ENCODE measurements at regions of chr14 and their contacts with region 1.

Region 1: DNA sequence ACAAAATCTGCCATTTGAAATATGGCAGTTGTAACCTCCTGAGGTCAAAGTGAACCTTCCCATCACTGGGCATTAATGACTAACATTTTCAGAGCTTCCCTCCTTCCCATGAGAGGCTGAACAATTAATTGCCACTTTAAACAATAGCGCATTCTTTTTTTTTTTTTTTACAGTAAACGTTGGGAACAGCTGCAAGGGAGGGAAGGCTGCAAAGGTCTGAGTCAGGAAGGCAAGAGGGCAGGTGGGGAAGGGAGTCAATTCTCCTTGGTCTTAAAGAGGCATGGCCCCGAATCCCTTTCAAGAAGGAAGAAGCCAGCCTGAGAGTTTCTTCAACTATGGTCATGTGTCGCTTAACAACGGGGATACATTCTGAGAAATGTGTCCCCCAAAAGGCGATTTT is 41.0 kb upstream of the PLEKHG3 start:
- DNase-seq: no peak
- H3K4me3 ChIP-seq: no peak overlapping the region
- H3K27ac ChIP-seq: no peak overlapping the region
- H3K4me1 ChIP-seq: peaks cover 0 to 10% (median 0%) of the 10 kb centered on the region in 4 donors
- H3K27me3 ChIP-seq: no peaks in the 10 kb centered on the region
- CTCF ChIP-seq: no peak
- EP300 ChIP-seq: no peak
- POLR2A ChIP-seq: no peak

Region 2: GRCh38 chr14:64636208-64636979 is 26.8 kb before region 1 on chr14:
- intact Hi-C with region 1: no loop called
- DNase-seq: no peak
- H3K4me3 ChIP-seq: no peak overlapping the region
- H3K27ac ChIP-seq: peak overlapping the region in 3 of 4 donors; percentile 24 to 43 (median 32)
- H3K4me1 ChIP-seq: peaks cover 4 to 18% (median 12%) of the 10 kb centered on the region in 4 donors
- H3K27me3 ChIP-seq: no peaks in the 10 kb centered on the region
- CTCF ChIP-seq: peak; percentile 89 to 95 (median 93)
- EP300 ChIP-seq: no peak
- POLR2A ChIP-seq: no peak

Region 3: GRCh38 chr14:64899958-64900357 is 236.8 kb after region 1 on chr14:
- intact Hi-C with region 1: loop called (anchors 10 kb)
- DNase-seq: no peak
- H3K4me3 ChIP-seq: no peak overlapping the region
- H3K27ac ChIP-seq: no peak overlapping the region
- H3K4me1 ChIP-seq: no peaks in the 10 kb centered on the region
- H3K27me3 ChIP-seq: peaks cover 0 to 9% (median 0%) of the 10 kb centered on the region in 4 donors
- CTCF ChIP-seq: no peak
- EP300 ChIP-seq: no peak
- POLR2A ChIP-seq: no peak

Measured in esophagus muscularis mucosa (tissue), 4 donors.